Dendritic cell treated with granulocyte-macrophage colony-stimulating factor and Interleukin-4, amounts not matched to agents 40 ng/mL and 50 ng/mL, for 4 days (primary cell): ENCODE measurements at regions of chr5 and their contacts with region 1.

Region 1: GRCh38 chr5:126354012-126354857 is 69.0 kb upstream of the GRAMD2B start:
- H3K4me3 Mint-ChIP-seq: peak overlapping the region; percentile 45
- H3K27ac Mint-ChIP-seq: no peak overlapping the region
- H3K4me1 Mint-ChIP-seq: peaks cover 38% of the 10 kb centered on the region
- H3K27me3 Mint-ChIP-seq: peaks cover 14% of the 10 kb centered on the region

Region 2: DNA sequence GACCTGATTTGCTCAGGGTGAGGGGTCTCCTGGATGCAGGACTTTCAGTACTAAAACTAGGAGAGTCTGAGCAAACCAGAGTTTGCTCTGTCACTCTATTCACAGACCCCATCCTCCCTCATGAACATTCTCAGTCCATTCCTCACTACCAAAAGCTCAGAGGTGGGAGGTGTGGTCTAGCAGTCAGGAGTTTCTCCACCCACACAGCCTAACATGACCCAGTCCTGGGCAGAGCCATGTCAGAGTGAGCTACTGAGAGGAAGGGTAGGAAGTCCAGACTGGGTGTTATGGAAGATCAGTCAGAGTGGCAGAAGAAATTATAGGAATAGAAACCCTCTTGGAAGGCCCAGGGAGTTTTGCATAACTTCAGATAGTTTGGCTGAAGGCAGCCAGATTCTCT is 44.4 kb before region 1 on chr5:
- intact Hi-C with region 1: no loop called
- H3K4me3 Mint-ChIP-seq: no peak overlapping the region
- H3K27ac Mint-ChIP-seq: no peak overlapping the region
- H3K4me1 Mint-ChIP-seq: no peaks in the 10 kb centered on the region
- H3K27me3 Mint-ChIP-seq: no peaks in the 10 kb centered on the region

Region 3: GRCh38 chr5:126422989-126423788 is 69.0 kb after region 1 on chr5 and contains the start of gene GRAMD2B:
- intact Hi-C with region 1: loop called (anchors 2 kb)
- H3K4me3 Mint-ChIP-seq: peak within 1 kb of the TSS; percentile 83
- H3K27ac Mint-ChIP-seq: peak within 1 kb of the TSS; percentile 71
- H3K4me1 Mint-ChIP-seq: peaks cover 13% of the 10 kb centered on the region
- H3K27me3 Mint-ChIP-seq: peaks cover 2% of the 10 kb centered on the region

Region 4: GRCh38 chr5:126600631-126601511 is 246.6 kb after region 1 on chr5 and contains the start of gene PHAX:
- intact Hi-C with region 1: loop called (anchors 2 kb)
- H3K4me3 Mint-ChIP-seq: peak within 1 kb of the TSS; percentile 96
- H3K27ac Mint-ChIP-seq: peak within 1 kb of the TSS; percentile 88
- H3K4me1 Mint-ChIP-seq: peaks cover 43% of the 10 kb centered on the region
- H3K27me3 Mint-ChIP-seq: peaks cover 2% of the 10 kb centered on the region

Region 5: GRCh38 chr5:127011961-127012644 is 657.9 kb after region 1 on chr5:
- intact Hi-C with region 1: no loop called
- H3K4me3 Mint-ChIP-seq: no peak overlapping the region
- H3K27ac Mint-ChIP-seq: no peak overlapping the region
- H3K4me1 Mint-ChIP-seq: peaks cover 15% of the 10 kb centered on the region
- H3K27me3 Mint-ChIP-seq: no peaks in the 10 kb centered on the region